CD4-positive, alpha-beta T cell (primary cell): ENCODE measurements at regions of chr1 and their contacts with region 1.

Region 1: GRCh38 chr1:23496490-23497181 is 12.7 kb upstream of the ASAP3 start:
- DNase-seq: no peak
- ATAC-seq: no peak
- H3K4me3 ChIP-seq: no peak overlapping the region
- H3K4me3 Mint-ChIP-seq: no peak overlapping the region
- H3K27ac ChIP-seq: no peak overlapping the region
- H3K27ac Mint-ChIP-seq: no peak overlapping the region
- H3K4me1 ChIP-seq: peaks cover 10% of the 10 kb centered on the region
- H3K4me1 Mint-ChIP-seq: no peaks in the 10 kb centered on the region
- H3K27me3 ChIP-seq: no peaks in the 10 kb centered on the region
- H3K27me3 Mint-ChIP-seq: no peaks in the 10 kb centered on the region
- CTCF ChIP-seq: no peak

Region 2: GRCh38 chr1:23484253-23485001 is 12.2 kb before region 1 on chr1:
- CTCF ChIA-PET with region 1: interaction called, 25 read pairs
- POLR2A ChIA-PET with region 1: interaction called, 3 read pairs
- intact Hi-C with region 1: no loop called
- DNase-seq: peak; percentile 85 to 96 (median 92)
- ATAC-seq: peak; percentile 93
- H3K4me3 ChIP-seq: peak overlapping the region; percentile 55
- H3K4me3 Mint-ChIP-seq: peak overlapping the region; percentile 92
- H3K27ac ChIP-seq: no peak overlapping the region
- H3K27ac Mint-ChIP-seq: peak overlapping the region; percentile 55
- H3K4me1 ChIP-seq: peaks cover 17% of the 10 kb centered on the region
- H3K4me1 Mint-ChIP-seq: peaks cover 19% of the 10 kb centered on the region
- H3K27me3 ChIP-seq: peaks cover 17 to 24% of the 10 kb centered on the region in 2 experiments
- H3K27me3 Mint-ChIP-seq: peaks cover 28% of the 10 kb centered on the region
- CTCF ChIP-seq: no peak

Region 3: GRCh38 chr1:23507507-23507906 is 10.9 kb after region 1 on chr1:
- CTCF ChIA-PET with region 1: interaction called, 13 read pairs
- POLR2A ChIA-PET with region 1: no interaction called
- intact Hi-C with region 1: no loop called
- DNase-seq: no peak
- ATAC-seq: no peak
- H3K4me3 ChIP-seq: no peak overlapping the region
- H3K4me3 Mint-ChIP-seq: no peak overlapping the region
- H3K27ac ChIP-seq: no peak overlapping the region
- H3K27ac Mint-ChIP-seq: no peak overlapping the region
- H3K4me1 ChIP-seq: no peaks in the 10 kb centered on the region
- H3K4me1 Mint-ChIP-seq: no peaks in the 10 kb centered on the region
- H3K27me3 ChIP-seq: no peaks in the 10 kb centered on the region
- H3K27me3 Mint-ChIP-seq: no peaks in the 10 kb centered on the region
- CTCF ChIP-seq: no peak

Region 4: DNA sequence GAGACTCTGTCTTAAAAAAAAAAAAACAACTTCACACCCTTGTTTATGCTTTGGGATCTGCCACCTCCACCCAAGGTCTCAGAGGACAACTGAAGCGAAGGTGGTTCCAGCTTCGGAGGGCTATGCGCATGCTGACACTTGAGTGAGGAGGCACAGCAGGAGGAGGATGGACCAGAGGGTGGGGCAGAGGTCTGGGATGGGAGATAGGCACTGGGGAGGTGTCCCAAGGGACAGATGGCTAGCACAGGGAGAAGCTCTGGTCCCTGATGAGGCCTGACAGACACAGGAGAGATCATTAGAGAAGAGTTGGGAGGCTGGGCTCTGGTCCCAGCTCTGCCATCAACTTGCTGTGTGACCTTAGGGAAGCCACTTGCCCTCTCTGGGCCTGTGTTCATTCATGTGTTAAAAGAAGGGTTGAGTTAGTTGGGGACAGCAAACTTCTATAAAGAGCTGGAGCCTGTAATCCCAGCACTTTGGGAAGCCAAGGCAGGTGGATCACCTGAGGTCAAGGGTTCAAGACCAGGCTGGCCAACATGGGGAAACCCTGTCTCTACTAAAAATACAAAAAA is 17.6 kb after region 1 on chr1:
- CTCF ChIA-PET with region 1: interaction called, 13 read pairs
- POLR2A ChIA-PET with region 1: no interaction called
- intact Hi-C with region 1: no loop called
- DNase-seq: no peak
- ATAC-seq: no peak
- H3K4me3 ChIP-seq: no peak overlapping the region
- H3K4me3 Mint-ChIP-seq: no peak overlapping the region
- H3K27ac ChIP-seq: no peak overlapping the region
- H3K27ac Mint-ChIP-seq: no peak overlapping the region
- H3K4me1 ChIP-seq: no peaks in the 10 kb centered on the region
- H3K4me1 Mint-ChIP-seq: no peaks in the 10 kb centered on the region
- H3K27me3 ChIP-seq: no peaks in the 10 kb centered on the region
- H3K27me3 Mint-ChIP-seq: no peaks in the 10 kb centered on the region
- CTCF ChIP-seq: no peak

Region 5: DNA sequence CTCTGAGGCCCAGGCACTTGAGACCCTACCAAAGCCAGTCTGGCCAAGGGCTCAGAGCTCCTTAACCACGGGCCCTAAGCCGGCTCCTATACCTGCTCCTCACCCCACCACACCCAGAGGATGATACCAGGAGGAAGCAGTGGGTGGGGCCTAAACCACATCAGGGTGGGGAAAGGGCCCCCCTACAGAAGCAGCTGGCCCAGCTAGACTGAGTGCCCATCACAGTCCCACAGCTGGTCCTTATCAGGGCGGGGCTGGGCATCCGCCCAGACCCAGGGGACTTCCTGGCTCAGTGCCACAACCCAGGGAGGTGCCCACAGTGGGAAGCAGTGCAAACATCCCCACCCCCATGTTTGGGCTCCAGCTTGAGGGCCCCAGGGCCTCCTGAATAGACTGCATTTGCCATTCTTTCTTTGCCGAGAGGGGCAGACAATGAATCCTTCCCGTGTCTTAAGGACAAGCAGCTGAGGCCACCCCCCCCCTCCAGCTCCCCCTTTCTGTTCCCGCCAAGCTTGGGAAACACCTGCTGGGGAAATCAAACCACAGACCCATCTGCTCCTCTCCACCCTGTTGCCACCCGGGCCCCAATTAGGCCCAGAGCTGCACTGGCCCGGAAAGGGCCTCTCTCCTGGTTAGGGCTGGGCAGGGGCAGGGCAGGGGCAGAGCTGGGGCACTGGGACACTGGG is 28.2 kb after region 1 on chr1:
- CTCF ChIA-PET with region 1: interaction called, 39 read pairs
- POLR2A ChIA-PET with region 1: interaction called, 38 read pairs
- intact Hi-C with region 1: no loop called
- DNase-seq: peak in 11 of 14 experiments; percentile 14 to 80 (median 30)
- ATAC-seq: peak; percentile 13
- H3K4me3 ChIP-seq: peak overlapping the region; percentile 10
- H3K4me3 Mint-ChIP-seq: peak overlapping the region; percentile 74
- H3K27ac ChIP-seq: peak overlapping the region; percentile 24 to 58
- H3K27ac Mint-ChIP-seq: peak overlapping the region; percentile 88
- H3K4me1 ChIP-seq: peaks cover 65% of the 10 kb centered on the region
- H3K4me1 Mint-ChIP-seq: peaks cover 73% of the 10 kb centered on the region
- H3K27me3 ChIP-seq: no peaks in the 10 kb centered on the region
- H3K27me3 Mint-ChIP-seq: no peaks in the 10 kb centered on the region
- CTCF ChIP-seq: no peak

Region 6: DNA sequence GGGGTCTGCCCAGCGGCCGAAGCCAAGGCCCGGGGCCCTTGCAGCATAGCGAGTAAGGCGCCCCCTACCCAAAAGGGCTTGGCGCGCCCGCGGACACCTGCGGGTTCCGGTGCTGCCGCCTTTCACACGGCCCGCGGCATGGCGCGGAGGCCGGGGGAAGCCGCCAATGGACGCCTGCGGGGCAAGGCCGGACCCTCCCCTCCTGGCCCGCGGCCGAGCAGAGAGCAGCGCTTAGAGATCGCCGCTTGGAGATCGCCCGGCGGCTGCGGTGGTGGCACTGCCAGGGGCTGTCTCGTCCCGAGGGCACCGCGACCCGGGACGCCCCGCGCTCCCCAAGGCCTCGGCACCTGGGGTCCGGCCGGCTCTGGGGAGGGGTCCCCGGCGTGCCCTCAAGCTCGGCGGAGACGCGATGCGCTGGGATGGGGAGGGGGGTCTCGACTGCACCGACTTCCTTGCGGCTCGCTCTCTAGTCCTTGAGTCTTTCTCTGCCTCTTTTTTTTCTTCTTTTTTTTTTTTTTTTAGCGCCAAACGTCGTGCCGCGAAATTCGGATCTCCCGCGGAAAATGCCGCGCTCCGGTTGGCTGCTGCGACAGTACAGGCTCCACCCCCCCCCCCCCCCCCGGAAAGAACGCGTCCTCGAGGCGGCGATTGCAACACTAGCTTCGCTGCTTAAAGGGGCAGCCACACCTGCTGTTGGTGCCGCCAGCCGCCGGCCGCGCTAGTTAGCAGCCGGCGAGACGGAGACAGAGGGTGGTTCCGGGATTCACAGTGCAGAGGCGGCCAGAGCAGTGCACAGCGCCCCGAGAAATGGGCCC is 34.3 kb after region 1 on chr1 and contains the start of gene E2F2:
- CTCF ChIA-PET with region 1: interaction called, 236 read pairs
- POLR2A ChIA-PET with region 1: interaction called, 38 read pairs
- intact Hi-C with region 1: no loop called
- DNase-seq: peak; percentile 66 to 92 (median 80)
- ATAC-seq: peak; percentile 79
- H3K4me3 ChIP-seq: peak within 1 kb of the TSS; percentile 44
- H3K4me3 Mint-ChIP-seq: peak within 1 kb of the TSS; percentile 91
- H3K27ac ChIP-seq: peak within 1 kb of the TSS in 1 of 2 donors; percentile 58
- H3K27ac Mint-ChIP-seq: peak within 1 kb of the TSS; percentile 84
- H3K4me1 ChIP-seq: peaks cover 78% of the 10 kb centered on the region
- H3K4me1 Mint-ChIP-seq: peaks cover 80% of the 10 kb centered on the region
- H3K27me3 ChIP-seq: no peaks in the 10 kb centered on the region
- H3K27me3 Mint-ChIP-seq: no peaks in the 10 kb centered on the region
- CTCF ChIP-seq: no peak
- total RNA-seq, gene E2F2: 0.50 to 0.69 TPM

Region 7: GRCh38 chr1:23539698-23540266 is 43.1 kb after region 1 on chr1:
- CTCF ChIA-PET with region 1: interaction called, 236 read pairs
- POLR2A ChIA-PET with region 1: interaction called, 41 read pairs
- intact Hi-C with region 1: loop called (anchors 1 kb)
- DNase-seq: peak; percentile 86 to 96 (median 90)
- ATAC-seq: peak; percentile 96
- H3K4me3 ChIP-seq: no peak overlapping the region
- H3K4me3 Mint-ChIP-seq: peak overlapping the region; percentile 11
- H3K27ac ChIP-seq: no peak overlapping the region
- H3K27ac Mint-ChIP-seq: peak overlapping the region; percentile 50
- H3K4me1 ChIP-seq: peaks cover 17% of the 10 kb centered on the region
- H3K4me1 Mint-ChIP-seq: peaks cover 18% of the 10 kb centered on the region
- H3K27me3 ChIP-seq: no peaks in the 10 kb centered on the region
- H3K27me3 Mint-ChIP-seq: no peaks in the 10 kb centered on the region
- CTCF ChIP-seq: peak; percentile 94